HepG2 (cell line): ENCODE measurements at regions of chr10 and their contacts with region 1.

Region 1: GRCh38 chr10:47317251-47317650 is 5.0 kb upstream of the GDF2 start:
- DNase-seq: no peak
- ATAC-seq: no peak
- H3K4me3 ChIP-seq: no peak overlapping the region
- H3K27ac ChIP-seq: no peak overlapping the region
- H3K4me1 ChIP-seq: no peaks in the 10 kb centered on the region
- H3K27me3 ChIP-seq: peaks cover 2 to 3% of the 10 kb centered on the region in 2 experiments; a peak in 2 of 5 replicates
- CTCF ChIP-seq: no peak
- EP300 ChIP-seq: no peak
- POLR2A ChIP-seq: no peak
- RAD21 ChIP-seq: no peak

Region 2: GRCh38 chr10:47277352-47278151 is 39.7 kb before region 1 on chr10:
- CTCF ChIA-PET with region 1: no interaction called
- POLR2A ChIA-PET with region 1: no interaction called
- in situ Hi-C with region 1: no loop called
- intact Hi-C with region 1: no loop called
- DNase-seq: no peak
- ATAC-seq: no peak
- H3K4me3 ChIP-seq: no peak overlapping the region
- H3K27ac ChIP-seq: no peak overlapping the region
- H3K4me1 ChIP-seq: no peaks in the 10 kb centered on the region
- H3K27me3 ChIP-seq: peaks cover 0 to 4% of the 10 kb centered on the region in 2 experiments; a peak in 3 of 5 replicates
- CTCF ChIP-seq: no peak
- EP300 ChIP-seq: no peak
- POLR2A ChIP-seq: no peak
- RAD21 ChIP-seq: no peak

Region 3: DNA sequence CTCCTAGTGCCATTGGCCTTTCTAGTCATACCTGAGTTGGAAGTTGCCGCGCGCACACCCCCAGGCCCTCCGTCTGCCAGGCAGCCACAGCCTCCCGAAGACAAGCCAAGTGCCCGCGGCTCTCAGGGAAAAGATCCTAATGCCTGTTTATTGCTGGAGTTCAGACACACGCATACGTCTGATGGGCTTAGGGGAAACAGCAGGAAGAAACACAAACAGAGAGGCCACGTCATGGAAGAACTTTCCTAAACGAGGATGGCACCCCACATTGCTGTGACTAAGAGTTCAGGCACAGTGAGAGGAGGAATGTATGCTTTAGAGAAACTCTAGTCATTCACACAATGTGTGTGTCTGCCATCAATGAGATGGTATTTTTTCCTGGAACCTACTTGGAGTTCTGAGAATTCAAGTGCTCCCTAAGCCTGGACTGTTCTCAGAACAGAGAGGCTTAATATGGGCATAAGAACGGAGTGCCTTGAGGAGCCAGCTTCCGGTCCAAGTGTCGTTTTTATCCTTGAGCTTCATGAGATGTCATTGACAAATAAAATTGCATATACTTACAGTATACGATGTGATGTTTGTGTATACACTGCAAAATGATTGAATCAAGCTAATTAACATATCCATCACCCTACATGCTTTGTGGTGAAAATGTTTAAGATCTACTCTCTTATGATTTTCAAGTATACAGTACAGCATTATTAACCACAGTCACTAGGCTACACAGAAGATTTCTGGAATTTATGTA is 19.3 kb after region 1 on chr10:
- CTCF ChIA-PET with region 1: no interaction called
- POLR2A ChIA-PET with region 1: no interaction called
- in situ Hi-C with region 1: no loop called
- intact Hi-C with region 1: loop called (anchors 2 kb)
- DNase-seq: no peak
- ATAC-seq: no peak
- H3K4me3 ChIP-seq: no peak overlapping the region
- H3K27ac ChIP-seq: no peak overlapping the region
- H3K4me1 ChIP-seq: no peaks in the 10 kb centered on the region
- H3K27me3 ChIP-seq: peaks cover 0 to 10% of the 10 kb centered on the region in 2 experiments; a peak in 1 of 5 replicates
- CTCF ChIP-seq: no peak
- EP300 ChIP-seq: no peak
- POLR2A ChIP-seq: no peak
- RAD21 ChIP-seq: no peak